ENCODE measurements at regions of chr2 and their contacts with region 1.

Region 1: GRCh38 chr2:71995067-71995665 is 152.5 kb downstream of the CYP26B1 start:
- DNase-seq: peak in 1 of 2 experiments; percentile 41
- H3K4me3 ChIP-seq: no peak overlapping the region
- H3K27ac ChIP-seq: no peak overlapping the region
- H3K4me1 ChIP-seq: no peaks in the 10 kb centered on the region
- H3K27me3 ChIP-seq: no peaks in the 10 kb centered on the region
- CTCF ChIP-seq: peak; percentile 72

Region 2: GRCh38 chr2:71545572-71546274 is 449.4 kb before region 1 on chr2:
- CTCF ChIA-PET with region 1: no interaction called
- POLR2A ChIA-PET with region 1: no interaction called
- intact Hi-C with region 1: loop called (anchors 1 kb)
- DNase-seq: peak; percentile 31 to 48
- H3K4me3 ChIP-seq: no peak overlapping the region
- H3K27ac ChIP-seq: no peak overlapping the region
- H3K4me1 ChIP-seq: no peaks in the 10 kb centered on the region
- H3K27me3 ChIP-seq: no peaks in the 10 kb centered on the region
- CTCF ChIP-seq: peak; percentile 87

Region 3: GRCh38 chr2:71923887-71924533 is 71.2 kb before region 1 on chr2:
- CTCF ChIA-PET with region 1: no interaction called
- POLR2A ChIA-PET with region 1: no interaction called
- intact Hi-C with region 1: loop called (anchors 5 kb)
- DNase-seq: peak; percentile 42 to 48
- H3K4me3 ChIP-seq: no peak overlapping the region
- H3K27ac ChIP-seq: no peak overlapping the region
- H3K4me1 ChIP-seq: peaks cover 10% of the 10 kb centered on the region
- H3K27me3 ChIP-seq: no peaks in the 10 kb centered on the region
- CTCF ChIP-seq: peak; percentile 94